ENCODE measurements at regions of chr13 and their contacts with region 1.

Region 1: GRCh38 chr13:36273431-36273830 is 24.2 kb downstream of the CCDC169 start:
- DNase-seq: no peak
- H3K4me3 ChIP-seq: no peak overlapping the region
- H3K27ac ChIP-seq: no peak overlapping the region
- H3K4me1 ChIP-seq: no peaks in the 10 kb centered on the region
- H3K27me3 ChIP-seq: no peaks in the 10 kb centered on the region
- CTCF ChIP-seq: no peak
- POLR2A ChIP-seq: no peak

Region 2: GRCh38 chr13:35978603-35979316 is 294.7 kb before region 1 on chr13:
- intact Hi-C with region 1: loop called (anchors 5 kb)
- DNase-seq: no peak
- H3K4me3 ChIP-seq: no peak overlapping the region
- H3K27ac ChIP-seq: peak overlapping the region; percentile 70
- H3K4me1 ChIP-seq: peaks cover 8% of the 10 kb centered on the region
- H3K27me3 ChIP-seq: no peaks in the 10 kb centered on the region
- CTCF ChIP-seq: peak; percentile 44 to 86 (median 64)
- POLR2A ChIP-seq: no peak

Region 3: DNA sequence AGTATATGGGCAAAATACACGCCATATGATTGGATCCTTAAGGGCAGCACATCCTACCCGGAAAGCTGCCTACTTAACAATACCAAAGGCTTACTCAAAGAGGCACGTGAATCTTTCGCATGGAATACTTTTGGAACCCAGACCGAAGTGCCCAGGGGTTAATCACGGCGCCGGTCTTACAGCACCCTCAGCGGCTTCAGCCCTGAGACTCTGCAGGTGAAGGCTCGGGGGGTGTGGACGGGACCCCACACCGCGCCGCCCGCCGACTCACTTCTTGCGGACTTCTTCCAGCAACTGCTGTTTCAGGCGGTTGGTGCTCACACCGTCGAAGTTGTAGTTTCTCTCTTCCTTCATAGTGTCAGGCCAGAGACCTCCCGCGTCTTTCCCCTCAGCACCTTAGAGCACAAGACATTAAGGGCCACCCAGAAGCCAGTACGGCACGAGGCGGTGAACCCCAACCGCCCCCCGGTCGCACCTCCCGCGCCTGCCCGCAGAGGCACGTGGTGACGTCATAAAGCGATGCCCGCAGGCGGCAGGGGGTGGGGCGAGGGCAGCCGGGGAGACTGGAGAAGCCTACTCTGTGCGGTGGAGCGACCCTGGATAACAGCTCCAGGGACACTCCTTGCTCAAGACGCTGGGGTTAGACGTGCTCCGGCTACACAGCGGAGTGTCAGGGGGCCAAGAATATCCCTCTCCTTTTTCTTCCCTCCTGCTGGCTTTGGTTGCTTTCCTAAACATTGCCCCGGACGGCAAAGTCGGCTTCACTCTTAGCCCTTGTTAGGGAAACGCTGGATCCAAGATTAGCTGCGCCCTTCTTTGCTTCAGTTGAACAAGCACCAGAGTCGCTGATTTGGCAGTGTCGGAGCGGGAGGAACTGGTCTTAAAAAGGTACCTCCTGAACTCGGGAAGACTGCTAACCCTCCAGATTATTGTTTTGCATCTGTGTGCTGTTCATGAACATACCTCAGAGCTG is 24.2 kb after region 1 on chr13 and contains the start of gene CCDC169:
- intact Hi-C with region 1: no loop called
- DNase-seq: peak in 1 of 2 donors; percentile 90
- H3K4me3 ChIP-seq: peak within 1 kb of the TSS; percentile 62 to 70
- H3K27ac ChIP-seq: peak within 1 kb of the TSS; percentile 67
- H3K4me1 ChIP-seq: peaks cover 18% of the 10 kb centered on the region
- H3K27me3 ChIP-seq: no peaks in the 10 kb centered on the region
- CTCF ChIP-seq: no peak
- POLR2A ChIP-seq: no peak
- total RNA-seq, gene CCDC169: not detected